ENCODE measurements at regions of chr3 and their contacts with region 1.

Region 1: DNA sequence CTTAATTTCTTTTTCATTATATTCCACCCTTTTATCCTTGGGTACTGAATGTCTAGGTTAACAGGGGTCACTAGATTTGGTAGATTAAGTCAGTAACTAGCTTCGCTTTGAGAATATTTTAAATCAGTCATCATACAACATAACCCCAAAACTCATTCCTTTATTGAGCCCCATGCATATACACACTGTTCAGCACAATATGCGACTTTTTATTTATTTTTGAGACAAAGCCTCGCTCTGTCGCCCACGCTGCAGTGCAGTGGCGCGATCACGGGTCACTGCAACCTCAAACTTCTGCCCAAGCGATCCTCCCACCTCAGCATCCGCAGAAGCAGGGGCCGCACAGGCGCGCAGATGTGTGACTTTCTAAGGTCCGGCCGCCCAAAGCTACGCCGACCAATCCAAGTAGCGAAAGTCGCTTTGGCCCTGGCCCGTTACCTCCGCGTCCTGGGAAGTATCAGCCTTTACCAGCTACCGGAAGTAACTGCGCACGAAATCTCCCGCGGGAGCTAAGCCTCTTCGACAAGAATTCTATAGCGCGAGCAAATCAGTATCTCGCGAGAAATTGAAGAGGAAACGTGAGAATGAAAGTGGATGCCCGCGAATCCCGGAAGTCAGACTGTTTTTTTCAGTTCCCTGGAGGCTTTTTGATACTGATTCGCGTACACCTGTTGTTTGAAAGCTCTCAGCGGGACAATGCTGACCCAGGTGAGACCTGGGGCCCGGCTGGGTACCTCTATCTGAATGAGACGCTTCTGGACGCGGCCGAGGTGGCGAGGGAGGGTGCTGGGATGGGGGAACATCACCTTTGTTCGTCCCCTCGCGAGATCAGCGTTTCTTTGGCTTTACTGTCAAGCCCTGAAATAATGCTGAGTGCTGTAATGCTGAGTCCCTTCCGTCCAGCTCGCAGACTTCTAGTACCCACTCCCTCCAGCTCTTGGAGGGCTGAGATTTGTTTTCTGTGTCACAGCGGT is at the starts of genes DHFR2 and NSUN3:
- DNase-seq: peak; percentile 89
- ATAC-seq: peak; percentile 90
- H3K4me3 Mint-ChIP-seq: peak within 1 kb of the TSS; percentile 96
- H3K27ac Mint-ChIP-seq: peak within 1 kb of the TSS; percentile 99
- H3K4me1 Mint-ChIP-seq: peaks cover 50% of the 10 kb centered on the region
- H3K27me3 Mint-ChIP-seq: no peaks in the 10 kb centered on the region
- CTCF ChIP-seq: no peak
- total RNA-seq, gene DHFR2: 6.3 to 8.1 TPM
- total RNA-seq, gene NSUN3: 11.9 to 15.5 TPM

Region 2: GRCh38 chr3:94004301-94004910 is 58.3 kb before region 1 on chr3:
- CTCF ChIA-PET with region 1: interaction called, 99 read pairs
- POLR2A ChIA-PET with region 1: interaction called, 4 read pairs
- intact Hi-C with region 1: no loop called
- DNase-seq: no peak
- ATAC-seq: peak; percentile 83
- H3K4me3 Mint-ChIP-seq: peak overlapping the region; percentile 44
- H3K27ac Mint-ChIP-seq: no peak overlapping the region
- H3K4me1 Mint-ChIP-seq: peaks cover 2% of the 10 kb centered on the region
- H3K27me3 Mint-ChIP-seq: no peaks in the 10 kb centered on the region
- CTCF ChIP-seq: peak; percentile 86

Region 3: GRCh38 chr3:94011233-94011711 is 51.4 kb before region 1 on chr3:
- CTCF ChIA-PET with region 1: interaction called, 5 read pairs
- POLR2A ChIA-PET with region 1: interaction called, 6 read pairs
- intact Hi-C with region 1: loop called (anchors 2 kb)
- DNase-seq: peak; percentile 2
- ATAC-seq: peak; percentile 84
- H3K4me3 Mint-ChIP-seq: peak overlapping the region; percentile 2
- H3K27ac Mint-ChIP-seq: peak overlapping the region; percentile 66
- H3K4me1 Mint-ChIP-seq: peaks cover 35% of the 10 kb centered on the region
- H3K27me3 Mint-ChIP-seq: no peaks in the 10 kb centered on the region
- CTCF ChIP-seq: no peak

Region 4: GRCh38 chr3:94036909-94037507 is 25.7 kb before region 1 on chr3:
- CTCF ChIA-PET with region 1: interaction called, 14 read pairs
- POLR2A ChIA-PET with region 1: no interaction called
- intact Hi-C with region 1: no loop called
- DNase-seq: no peak
- ATAC-seq: peak; percentile 65
- H3K4me3 Mint-ChIP-seq: no peak overlapping the region
- H3K27ac Mint-ChIP-seq: no peak overlapping the region
- H3K4me1 Mint-ChIP-seq: no peaks in the 10 kb centered on the region
- H3K27me3 Mint-ChIP-seq: no peaks in the 10 kb centered on the region
- CTCF ChIP-seq: peak; percentile 35

Region 5: DNA sequence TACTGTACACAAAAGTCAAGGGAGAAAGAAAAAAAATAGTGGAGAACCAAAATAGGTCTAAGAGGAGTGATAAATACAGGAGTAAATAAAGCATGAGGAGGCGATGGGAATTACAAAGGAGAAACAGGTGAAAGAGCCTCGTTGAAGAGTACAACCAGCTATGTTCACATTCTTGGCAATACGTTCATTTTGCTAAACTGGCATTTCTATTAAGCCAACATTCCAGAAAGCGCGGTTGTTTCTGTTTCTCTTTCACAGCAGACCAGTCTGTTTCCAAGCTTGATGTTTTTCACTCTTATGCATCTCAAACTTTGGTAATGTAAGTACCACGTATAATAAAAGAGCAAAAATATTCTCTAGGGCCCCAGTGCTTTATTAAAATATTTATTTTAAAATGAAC is 74.7 kb after region 1 on chr3:
- CTCF ChIA-PET with region 1: no interaction called
- POLR2A ChIA-PET with region 1: no interaction called
- intact Hi-C with region 1: no loop called
- DNase-seq: no peak
- ATAC-seq: no peak
- H3K4me3 Mint-ChIP-seq: no peak overlapping the region
- H3K27ac Mint-ChIP-seq: no peak overlapping the region
- H3K4me1 Mint-ChIP-seq: no peaks in the 10 kb centered on the region
- H3K27me3 Mint-ChIP-seq: peaks cover 2% of the 10 kb centered on the region
- CTCF ChIP-seq: no peak

Measured in activated CD8-positive, alpha-beta T cell treated with anti-CD3 and anti-CD28 coated beads for 36 hours (primary cell).